ENCODE measurements at regions of chr6 and their contacts with region 1.

Region 1: DNA sequence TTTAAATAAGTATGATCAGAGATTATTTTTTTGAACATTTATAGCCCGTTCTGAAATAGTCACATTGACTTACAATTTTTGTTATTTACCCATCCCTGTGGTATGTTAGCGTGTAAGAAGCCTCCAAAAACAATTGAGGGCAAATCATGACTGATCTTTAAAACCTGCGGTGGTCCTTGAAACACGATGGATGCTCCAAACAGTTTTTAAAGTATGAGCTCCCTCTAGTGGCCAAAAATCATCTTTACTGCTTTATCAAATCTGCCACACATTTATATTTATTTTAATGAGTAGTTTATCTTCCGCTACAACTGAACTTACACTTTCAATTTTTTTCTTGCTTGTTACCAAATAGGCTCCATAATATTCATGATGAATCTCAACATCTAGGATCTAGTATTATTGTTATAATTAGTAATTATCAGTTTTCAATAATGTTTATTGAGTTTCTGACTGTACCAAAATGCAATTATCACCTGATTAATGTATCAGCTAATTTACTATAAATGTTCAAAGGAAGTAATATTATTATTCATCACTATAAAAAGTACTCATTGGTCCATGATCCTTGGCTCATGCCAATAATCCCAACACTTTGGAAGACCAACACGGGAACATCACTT is 52.2 kb downstream of the MARCKS start:
- DNase-seq: peak; percentile 8
- ATAC-seq: peak; percentile 64
- H3K4me3 Mint-ChIP-seq: no peak overlapping the region
- H3K27ac Mint-ChIP-seq: no peak overlapping the region
- H3K4me1 Mint-ChIP-seq: no peaks in the 10 kb centered on the region
- H3K27me3 Mint-ChIP-seq: peaks cover 9% of the 10 kb centered on the region
- CTCF ChIP-seq: peak; percentile 74

Region 2: GRCh38 chr6:113306552-113307145 is 602.7 kb before region 1 on chr6:
- CTCF ChIA-PET with region 1: interaction called, 14 read pairs
- POLR2A ChIA-PET with region 1: no interaction called
- intact Hi-C with region 1: loop called (anchors 5 kb)
- DNase-seq: peak; percentile 74
- ATAC-seq: peak; percentile 64
- H3K4me3 Mint-ChIP-seq: no peak overlapping the region
- H3K27ac Mint-ChIP-seq: no peak overlapping the region
- H3K4me1 Mint-ChIP-seq: no peaks in the 10 kb centered on the region
- H3K27me3 Mint-ChIP-seq: no peaks in the 10 kb centered on the region
- CTCF ChIP-seq: peak; percentile 47

Region 3: GRCh38 chr6:113924312-113924723 is 15.0 kb after region 1 on chr6:
- CTCF ChIA-PET with region 1: interaction called, 11 read pairs
- POLR2A ChIA-PET with region 1: no interaction called
- intact Hi-C with region 1: no loop called
- DNase-seq: no peak
- ATAC-seq: no peak
- H3K4me3 Mint-ChIP-seq: no peak overlapping the region
- H3K27ac Mint-ChIP-seq: no peak overlapping the region
- H3K4me1 Mint-ChIP-seq: peaks cover 9% of the 10 kb centered on the region
- H3K27me3 Mint-ChIP-seq: peaks cover 8% of the 10 kb centered on the region
- CTCF ChIP-seq: no peak

Measured in activated CD8-positive, alpha-beta T cell treated with anti-CD3 and anti-CD28 coated beads for 36 hours (primary cell).